ENCODE measurements at regions of chr6 and their contacts with region 1.

Region 1: DNA sequence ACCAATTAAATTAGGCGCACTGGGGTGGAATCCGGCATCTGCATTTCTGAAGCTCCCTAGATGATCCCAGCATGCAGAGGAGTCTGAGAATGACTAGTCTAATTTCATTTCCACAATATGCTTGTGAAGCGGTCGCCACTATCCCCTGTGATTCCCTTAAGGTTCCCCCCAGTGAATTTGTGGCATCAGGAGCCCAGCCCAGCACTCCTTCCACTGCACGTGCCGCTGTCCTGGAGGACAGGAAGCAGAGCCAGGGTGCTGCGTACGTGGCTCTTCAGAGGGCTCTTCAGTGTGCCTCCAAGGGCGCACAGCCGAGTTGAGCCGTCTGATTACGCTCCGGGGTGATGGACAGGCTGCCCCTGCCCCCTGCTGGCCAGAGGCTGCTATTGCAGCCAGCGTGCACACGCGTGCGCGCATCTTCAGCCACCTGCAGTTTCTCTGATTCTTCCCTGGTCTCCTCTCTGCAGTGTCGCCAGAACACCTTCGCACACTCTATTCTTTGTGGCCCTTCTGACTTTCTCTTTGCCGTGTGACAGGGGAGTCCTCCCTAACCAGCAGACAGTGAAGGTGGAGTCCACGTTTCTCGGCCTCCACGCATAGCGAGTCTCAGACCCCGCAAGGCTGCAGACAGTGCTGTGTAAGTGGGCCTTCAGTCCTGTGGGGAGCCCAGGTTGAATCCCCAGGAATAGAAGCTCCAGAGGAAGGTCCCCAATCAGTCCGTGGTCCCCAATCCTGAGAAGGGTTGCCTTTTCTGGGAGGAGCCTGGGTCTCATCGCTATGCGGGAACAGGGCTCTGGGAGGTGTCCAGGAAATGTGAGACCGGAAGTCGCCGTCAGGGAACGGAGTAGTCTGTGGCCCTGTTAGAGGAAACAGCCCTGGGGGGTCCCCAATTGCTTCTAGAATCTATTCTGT is 16.5 kb upstream of the NCR2 start:
- DNase-seq: peak; percentile 82 to 84
- H3K4me3 ChIP-seq: no peak overlapping the region
- H3K4me3 Mint-ChIP-seq: peak overlapping the region; percentile 37
- H3K27ac Mint-ChIP-seq: no peak overlapping the region
- H3K4me1 ChIP-seq: no peaks in the 10 kb centered on the region
- H3K4me1 Mint-ChIP-seq: peaks cover 8% of the 10 kb centered on the region
- H3K27me3 ChIP-seq: no peaks in the 10 kb centered on the region; the same call in 1 of the 2 replicates
- H3K27me3 Mint-ChIP-seq: peaks cover 18% of the 10 kb centered on the region
- CTCF ChIP-seq: peak; percentile 97 to 99

Region 2: DNA sequence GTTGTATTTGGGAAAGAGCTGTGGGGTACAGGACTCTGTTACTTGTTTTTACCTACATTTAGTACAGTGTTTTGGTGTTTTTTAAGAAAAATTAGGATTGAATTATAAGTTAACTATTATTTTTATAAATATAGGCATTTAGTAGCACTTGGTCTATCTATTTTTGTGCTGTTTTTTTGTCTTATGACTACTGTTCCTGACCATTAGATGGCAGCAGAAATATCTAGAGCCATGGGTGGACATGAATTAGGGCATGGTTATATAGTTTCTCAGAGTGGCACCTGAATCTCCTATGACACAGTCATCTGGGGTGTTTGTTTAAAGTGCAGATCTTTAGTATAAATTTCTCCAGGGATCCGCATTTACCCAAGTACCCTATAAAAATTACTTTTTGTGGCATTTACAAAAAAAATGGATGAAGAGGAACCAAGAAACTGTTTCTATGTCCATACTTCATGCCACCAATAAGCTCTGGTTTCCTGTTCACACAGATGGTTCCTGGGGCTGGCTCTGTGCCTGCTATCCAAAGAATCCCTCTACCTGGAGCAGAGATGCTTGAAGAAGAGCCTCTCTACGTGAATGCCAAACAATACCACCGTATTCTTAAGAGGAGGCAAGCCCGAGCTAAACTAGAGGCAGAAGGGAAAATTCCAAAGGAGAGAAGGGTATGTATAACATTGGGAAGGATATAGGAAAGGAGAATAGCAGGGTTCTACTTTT is 226.3 kb before region 1 on chr6:
- CTCF ChIA-PET with region 1: no interaction called
- POLR2A ChIA-PET with region 1: no interaction called
- intact Hi-C with region 1: loop called (anchors 2 kb)
- DNase-seq: no peak
- H3K4me3 ChIP-seq: no peak overlapping the region
- H3K4me3 Mint-ChIP-seq: no peak overlapping the region
- H3K27ac Mint-ChIP-seq: no peak overlapping the region
- H3K4me1 ChIP-seq: no peaks in the 10 kb centered on the region
- H3K4me1 Mint-ChIP-seq: no peaks in the 10 kb centered on the region
- H3K27me3 ChIP-seq: no peaks in the 10 kb centered on the region
- H3K27me3 Mint-ChIP-seq: no peaks in the 10 kb centered on the region
- CTCF ChIP-seq: peak; percentile 32 to 37

Region 3: GRCh38 chr6:41182069-41183034 is 136.6 kb before region 1 on chr6:
- CTCF ChIA-PET with region 1: interaction called, 3 read pairs
- POLR2A ChIA-PET with region 1: no interaction called
- intact Hi-C with region 1: loop called (anchors 10 kb)
- DNase-seq: peak; percentile 65 to 70
- H3K4me3 ChIP-seq: no peak overlapping the region
- H3K4me3 Mint-ChIP-seq: no peak overlapping the region
- H3K27ac Mint-ChIP-seq: no peak overlapping the region
- H3K4me1 ChIP-seq: no peaks in the 10 kb centered on the region
- H3K4me1 Mint-ChIP-seq: no peaks in the 10 kb centered on the region
- H3K27me3 ChIP-seq: no peaks in the 10 kb centered on the region
- H3K27me3 Mint-ChIP-seq: peaks cover 8% of the 10 kb centered on the region
- CTCF ChIP-seq: peak; percentile 57 to 83

Region 4: DNA sequence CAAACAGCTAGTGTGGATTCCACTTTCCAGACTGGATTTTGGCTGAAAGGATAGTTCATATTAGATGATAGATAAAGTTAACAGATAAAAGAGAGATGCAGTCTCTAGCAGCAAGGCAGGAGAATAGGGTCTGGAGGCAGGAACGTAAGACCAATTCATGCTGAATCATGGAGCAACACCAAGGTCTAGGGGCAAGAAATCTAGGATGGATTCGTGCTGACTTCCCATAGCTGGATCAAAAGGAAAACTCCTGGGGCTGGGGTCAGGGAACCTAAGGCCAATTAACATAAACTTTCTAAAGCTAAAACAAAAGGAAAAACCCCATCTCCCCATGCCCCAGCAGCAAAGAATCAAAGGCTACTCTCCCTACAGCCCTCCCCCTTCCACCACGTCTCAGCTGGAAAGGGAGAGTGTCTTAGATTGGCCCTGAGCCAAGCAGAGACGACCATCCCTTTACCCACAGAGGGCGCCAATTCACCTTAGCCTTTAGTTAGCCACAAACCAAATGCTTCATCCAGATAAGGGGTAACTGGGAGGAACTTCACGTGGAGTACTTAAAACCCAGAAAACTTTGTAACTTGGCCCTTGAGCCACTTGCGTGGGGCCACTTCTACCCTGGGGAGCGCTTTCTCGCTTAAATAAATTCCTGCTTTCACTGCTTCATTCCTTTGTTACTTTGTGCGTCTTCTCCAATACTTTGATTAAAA is 40.1 kb before region 1 on chr6:
- CTCF ChIA-PET with region 1: no interaction called
- POLR2A ChIA-PET with region 1: no interaction called
- intact Hi-C with region 1: loop called (anchors 1 kb)
- DNase-seq: peak; percentile 61 to 64
- H3K4me3 ChIP-seq: no peak overlapping the region
- H3K4me3 Mint-ChIP-seq: no peak overlapping the region
- H3K27ac Mint-ChIP-seq: no peak overlapping the region
- H3K4me1 ChIP-seq: no peaks in the 10 kb centered on the region
- H3K4me1 Mint-ChIP-seq: no peaks in the 10 kb centered on the region
- H3K27me3 ChIP-seq: no peaks in the 10 kb centered on the region; the same call in 1 of the 2 replicates
- H3K27me3 Mint-ChIP-seq: peaks cover 17% of the 10 kb centered on the region
- CTCF ChIP-seq: peak; percentile 38 to 74

Region 5: DNA sequence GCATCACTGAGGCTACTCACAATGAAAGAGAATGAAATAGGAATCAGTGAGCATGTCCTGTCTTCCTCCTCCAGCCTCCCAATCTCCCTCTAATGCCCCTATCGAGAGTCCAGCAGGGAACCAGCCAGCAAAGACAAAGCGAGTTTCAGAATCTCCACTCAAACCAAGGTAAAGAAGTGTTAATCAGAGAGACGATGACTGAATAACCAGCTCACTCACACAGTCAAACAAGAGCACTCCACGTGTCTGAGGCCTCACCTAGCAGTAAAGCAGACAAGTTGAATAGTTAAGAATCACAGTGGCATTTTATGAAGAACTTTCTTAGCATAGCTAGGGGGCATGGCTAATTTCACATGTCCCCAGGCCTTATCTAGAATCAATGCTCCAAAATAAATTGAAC is 29.1 kb before region 1 on chr6:
- CTCF ChIA-PET with region 1: no interaction called
- POLR2A ChIA-PET with region 1: no interaction called
- intact Hi-C with region 1: no loop called
- DNase-seq: no peak
- H3K4me3 ChIP-seq: no peak overlapping the region
- H3K4me3 Mint-ChIP-seq: no peak overlapping the region
- H3K27ac Mint-ChIP-seq: no peak overlapping the region
- H3K4me1 ChIP-seq: no peaks in the 10 kb centered on the region
- H3K4me1 Mint-ChIP-seq: no peaks in the 10 kb centered on the region
- H3K27me3 ChIP-seq: peaks cover 1% of the 10 kb centered on the region; the same call in 1 of the 2 replicates
- H3K27me3 Mint-ChIP-seq: peaks cover 15% of the 10 kb centered on the region
- CTCF ChIP-seq: no peak

Region 6: GRCh38 chr6:41306187-41306854 is 12.6 kb before region 1 on chr6:
- CTCF ChIA-PET with region 1: interaction called, 3 read pairs
- POLR2A ChIA-PET with region 1: no interaction called
- intact Hi-C with region 1: loop called (anchors 1 kb)
- DNase-seq: peak; percentile 57 to 71
- H3K4me3 ChIP-seq: no peak overlapping the region
- H3K4me3 Mint-ChIP-seq: no peak overlapping the region
- H3K27ac Mint-ChIP-seq: no peak overlapping the region
- H3K4me1 ChIP-seq: no peaks in the 10 kb centered on the region
- H3K4me1 Mint-ChIP-seq: no peaks in the 10 kb centered on the region
- H3K27me3 ChIP-seq: peaks cover 1% of the 10 kb centered on the region
- H3K27me3 Mint-ChIP-seq: peaks cover 5% of the 10 kb centered on the region
- CTCF ChIP-seq: peak; percentile 55 to 62

Region 7: GRCh38 chr6:41775293-41776181 is 456.6 kb after region 1 on chr6:
- CTCF ChIA-PET with region 1: no interaction called
- POLR2A ChIA-PET with region 1: no interaction called
- intact Hi-C with region 1: no loop called
- DNase-seq: peak; percentile 77 to 80
- H3K4me3 ChIP-seq: no peak overlapping the region
- H3K4me3 Mint-ChIP-seq: no peak overlapping the region
- H3K27ac Mint-ChIP-seq: no peak overlapping the region
- H3K4me1 ChIP-seq: no peaks in the 10 kb centered on the region
- H3K4me1 Mint-ChIP-seq: no peaks in the 10 kb centered on the region
- H3K27me3 ChIP-seq: no peaks in the 10 kb centered on the region
- H3K27me3 Mint-ChIP-seq: no peaks in the 10 kb centered on the region
- CTCF ChIP-seq: peak; percentile 81 to 90